A673 (cell line): ENCODE measurements at regions of chr12 and their contacts with region 1.

Region 1: GRCh38 chr12:42129595-42130204 is 15.0 kb downstream of the GXYLT1 start:
- DNase-seq: peak; percentile 85
- H3K4me3 ChIP-seq: no peak overlapping the region
- H3K27ac ChIP-seq: no peak overlapping the region
- H3K4me1 ChIP-seq: peaks cover 26% of the 10 kb centered on the region
- H3K27me3 ChIP-seq: no peaks in the 10 kb centered on the region
- CTCF ChIP-seq: peak; percentile 93

Region 2: DNA sequence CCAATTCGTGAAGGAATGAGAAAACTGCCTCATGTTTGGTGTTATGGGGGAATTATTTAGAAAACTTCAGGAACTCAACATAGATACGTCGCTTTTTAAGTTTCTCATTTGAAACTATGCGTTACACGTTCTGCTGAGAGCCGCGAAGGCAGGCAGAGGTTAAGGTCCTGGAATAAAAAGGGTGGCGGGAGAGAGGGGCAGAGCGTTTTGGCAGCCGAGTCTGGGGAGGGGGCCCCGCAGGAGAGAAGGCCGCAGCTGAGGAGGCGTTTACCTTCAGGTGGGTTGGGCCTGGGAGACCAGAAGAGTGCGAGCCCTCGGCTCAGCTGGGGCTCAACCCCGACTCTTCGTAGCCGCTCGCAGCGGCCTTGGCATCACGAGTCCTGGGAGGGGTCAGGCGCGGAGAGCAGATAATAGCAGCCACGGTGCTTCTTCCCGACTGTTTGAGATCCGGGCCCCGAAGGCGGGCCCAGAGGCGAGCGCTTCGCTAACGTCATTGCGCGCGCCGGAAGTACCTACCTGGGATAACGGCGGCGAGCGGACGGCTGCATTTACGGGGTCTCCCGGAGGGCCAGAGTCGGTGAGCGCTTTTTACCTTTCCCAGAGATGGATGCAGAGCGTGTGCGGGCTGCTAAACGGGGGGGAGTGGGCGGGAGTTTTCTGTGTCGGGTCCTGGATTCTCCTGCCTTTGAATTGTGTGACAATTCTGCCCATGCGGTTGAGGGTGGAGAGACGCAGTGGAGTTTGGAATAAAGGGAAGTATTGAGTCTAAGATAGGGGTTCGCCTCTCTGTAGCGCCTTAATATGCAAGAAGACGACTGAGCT is 196.2 kb after region 1 on chr12 and contains the starts of genes PPHLN1 and ZCRB1:
- CTCF ChIA-PET with region 1: no interaction called
- POLR2A ChIA-PET with region 1: no interaction called
- intact Hi-C with region 1: loop called (anchors 2 kb)
- DNase-seq: peak; percentile 89
- H3K4me3 ChIP-seq: peak within 1 kb of the TSS; percentile 79
- H3K27ac ChIP-seq: peak within 1 kb of the TSS; percentile 86
- H3K4me1 ChIP-seq: peaks cover 14% of the 10 kb centered on the region
- H3K27me3 ChIP-seq: no peaks in the 10 kb centered on the region
- CTCF ChIP-seq: no peak
- total RNA-seq, gene PPHLN1: 90.1 and 96.2 TPM in 2 replicates
- total RNA-seq, gene ZCRB1: 110 TPM in 2 replicates

Region 3: DNA sequence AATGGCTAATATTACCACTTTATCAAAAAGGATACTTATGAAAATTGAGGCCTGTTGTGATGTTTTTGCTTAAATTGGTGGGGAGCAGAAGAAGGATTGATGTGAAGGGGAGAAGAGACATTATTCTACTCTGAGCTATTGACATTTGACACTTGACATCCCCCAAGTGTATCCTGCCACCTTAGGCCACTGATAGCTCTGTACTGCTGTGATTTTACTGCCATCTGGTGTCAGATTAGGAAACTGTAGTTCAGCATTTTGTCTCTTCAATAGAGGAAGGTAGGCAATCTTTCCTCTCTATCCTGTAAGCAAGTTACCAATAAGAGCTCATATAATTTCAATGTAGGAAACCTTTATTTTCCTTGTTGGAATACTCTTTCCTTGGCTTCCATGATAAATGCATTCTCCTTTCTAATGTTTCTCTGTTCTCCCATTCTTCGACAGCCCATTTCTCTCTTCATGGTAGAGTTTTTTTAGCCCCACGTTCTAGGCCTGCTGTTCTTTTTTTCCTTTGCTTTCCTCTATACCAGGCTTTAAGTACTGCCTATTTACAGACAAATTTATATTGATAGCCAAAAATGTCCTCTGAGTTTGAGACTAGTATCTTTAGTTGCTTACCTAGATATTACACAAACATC is 242.6 kb after region 1 on chr12:
- CTCF ChIA-PET with region 1: interaction called, 3 read pairs
- POLR2A ChIA-PET with region 1: no interaction called
- intact Hi-C with region 1: loop called (anchors 2 kb)
- DNase-seq: peak; percentile 70
- H3K4me3 ChIP-seq: no peak overlapping the region
- H3K27ac ChIP-seq: no peak overlapping the region
- H3K4me1 ChIP-seq: no peaks in the 10 kb centered on the region
- H3K27me3 ChIP-seq: no peaks in the 10 kb centered on the region
- CTCF ChIP-seq: peak; percentile 82

Region 4: DNA sequence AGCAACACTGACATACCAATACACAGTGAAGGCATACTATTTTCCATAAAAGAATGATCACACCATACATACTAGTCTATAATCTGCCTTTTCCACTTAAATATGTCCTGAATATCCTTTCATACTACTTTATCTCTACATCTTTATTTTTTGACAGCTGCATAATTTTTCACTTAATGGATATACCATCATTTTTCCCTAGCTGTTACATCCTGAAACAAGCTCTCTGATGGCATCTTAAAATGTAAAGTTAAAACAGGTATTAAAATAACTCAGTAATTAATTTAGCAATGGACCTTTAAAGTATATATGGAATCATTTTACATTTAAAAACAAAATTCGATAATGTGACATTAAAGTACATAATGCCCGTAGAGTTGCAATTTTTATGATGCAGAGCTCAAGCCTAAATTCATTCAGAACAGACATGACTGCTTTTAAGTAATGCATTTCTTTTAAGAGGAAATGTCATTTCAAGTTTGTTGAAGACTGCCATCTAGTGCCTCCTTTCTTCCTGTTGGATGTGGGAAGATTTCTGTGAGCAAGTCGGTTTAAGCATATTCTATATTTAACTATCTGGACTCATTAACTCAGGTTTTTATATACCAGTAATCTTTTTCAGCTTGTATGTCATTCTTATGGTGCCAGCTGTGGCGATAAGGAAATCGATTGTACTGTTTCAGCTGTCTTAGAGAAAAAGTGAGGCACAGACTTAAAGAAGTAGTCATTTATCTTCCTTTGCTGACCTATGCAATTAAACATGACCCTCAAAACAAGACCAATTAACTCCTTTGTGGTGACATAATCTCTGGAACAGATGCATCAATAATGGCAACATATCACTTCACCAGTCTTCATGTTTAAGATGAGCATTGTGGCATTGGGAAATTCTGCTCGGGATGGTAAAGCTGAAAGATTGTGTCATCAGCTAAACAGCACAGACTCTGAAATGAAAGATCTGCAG is 439.5 kb after region 1 on chr12:
- CTCF ChIA-PET with region 1: no interaction called
- POLR2A ChIA-PET with region 1: no interaction called
- intact Hi-C with region 1: loop called (anchors 5 kb)
- DNase-seq: peak; percentile 74
- H3K4me3 ChIP-seq: no peak overlapping the region
- H3K27ac ChIP-seq: no peak overlapping the region
- H3K4me1 ChIP-seq: no peaks in the 10 kb centered on the region
- H3K27me3 ChIP-seq: no peaks in the 10 kb centered on the region
- CTCF ChIP-seq: peak; percentile 71